Psoas muscle (tissue), 8 donors: ENCODE measurements at regions of chr6 and their contacts with region 1.

Region 1: DNA sequence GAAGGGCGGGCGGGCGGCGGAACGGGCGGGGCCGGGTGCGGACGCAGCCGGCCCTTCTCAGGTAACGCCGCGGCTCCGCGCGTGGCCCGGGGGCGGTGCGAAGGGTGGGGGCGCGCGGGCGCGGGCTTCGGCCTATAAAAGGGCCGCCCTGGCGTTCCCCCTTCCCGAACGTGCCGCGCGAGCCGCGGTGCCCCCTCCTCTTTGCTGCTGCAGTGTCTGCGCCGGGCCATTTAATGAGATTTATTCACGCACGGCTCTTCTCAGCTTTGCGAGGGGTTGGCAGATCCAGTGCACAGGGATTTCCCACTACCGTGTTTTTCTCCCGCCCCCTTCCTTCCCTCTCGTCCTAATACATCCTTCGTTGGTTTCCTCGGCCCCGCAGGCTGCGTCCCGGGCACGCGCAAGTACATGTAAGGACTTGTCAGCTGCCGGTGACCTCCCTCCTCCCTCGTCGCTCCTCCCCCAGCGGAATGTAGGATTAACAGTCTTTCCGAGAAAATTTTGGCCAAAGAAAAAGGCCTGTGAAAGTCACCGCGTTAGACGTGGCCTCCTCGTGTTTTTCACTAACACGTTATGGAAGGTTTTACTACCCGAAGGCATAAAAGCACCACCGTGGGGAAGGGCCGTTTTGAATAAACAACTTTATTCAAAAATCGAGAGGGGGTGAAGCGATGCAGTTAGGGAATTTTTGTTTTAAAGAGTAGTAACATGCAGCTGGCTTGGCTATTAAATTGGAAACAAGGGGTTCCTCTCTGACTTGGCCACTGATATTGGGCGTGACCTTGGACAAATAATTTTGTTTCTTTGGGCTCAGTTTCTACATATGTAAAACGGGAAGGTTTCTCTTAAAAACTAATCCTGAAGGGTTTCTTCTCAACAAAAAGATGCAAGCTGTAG is 966 bp upstream of the REV3L start:
- DNase-seq: peak; percentile 94 to 95
- ATAC-seq: peak; percentile 85 to 89 (median 86)
- H3K4me3 ChIP-seq: peak overlapping the region; percentile 94
- H3K27ac ChIP-seq: peak overlapping the region; percentile 98
- H3K4me1 ChIP-seq: peaks cover 43% of the 10 kb centered on the region
- H3K27me3 ChIP-seq: no peaks in the 10 kb centered on the region
- CTCF ChIP-seq: no peak

Region 2: DNA sequence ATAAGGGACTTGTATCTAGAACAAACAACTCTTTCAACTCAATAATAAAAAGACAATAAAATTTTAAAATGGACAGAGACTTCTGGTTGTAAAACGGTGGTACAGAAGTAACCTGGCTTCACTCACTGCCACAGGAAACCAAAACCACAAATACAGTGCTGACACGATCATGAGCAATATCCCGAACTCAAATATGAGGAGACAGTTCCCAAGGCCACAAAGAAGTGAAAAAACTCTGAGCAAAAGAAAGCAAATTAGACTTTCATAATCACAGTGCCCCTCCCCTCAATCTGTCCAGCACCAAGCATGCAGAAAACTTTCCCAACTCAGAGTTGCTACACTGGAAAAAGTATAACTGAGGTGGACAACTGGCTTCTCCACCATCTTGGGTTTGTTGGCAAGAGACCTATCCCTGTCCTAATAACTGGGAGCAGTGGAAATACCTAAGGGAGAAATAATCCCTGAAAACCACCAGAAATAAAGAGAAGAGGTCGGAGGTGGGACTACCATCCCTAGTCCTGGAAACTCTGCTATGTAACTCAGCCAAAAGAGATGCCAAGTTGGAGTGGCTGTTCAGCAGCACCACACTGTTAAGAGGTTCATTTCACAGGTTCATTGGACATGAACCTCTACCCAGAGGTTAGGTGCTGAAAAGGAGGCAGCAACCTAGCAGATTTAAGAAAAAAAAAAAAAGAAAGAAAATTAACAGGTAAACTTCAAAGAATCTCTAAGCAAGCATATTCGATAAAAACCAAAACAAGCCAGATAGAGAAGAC is 56.5 kb before region 1 on chr6:
- intact Hi-C with region 1: loop called in 1 of 2 experiments (anchors 5 kb)
- DNase-seq: no peak
- ATAC-seq: peak; percentile 58 to 68 (median 65)
- H3K4me3 ChIP-seq: no peak overlapping the region
- H3K27ac ChIP-seq: peak overlapping the region; percentile 10
- H3K4me1 ChIP-seq: peaks cover 54% of the 10 kb centered on the region
- H3K27me3 ChIP-seq: no peaks in the 10 kb centered on the region
- CTCF ChIP-seq: no peak

Region 3: DNA sequence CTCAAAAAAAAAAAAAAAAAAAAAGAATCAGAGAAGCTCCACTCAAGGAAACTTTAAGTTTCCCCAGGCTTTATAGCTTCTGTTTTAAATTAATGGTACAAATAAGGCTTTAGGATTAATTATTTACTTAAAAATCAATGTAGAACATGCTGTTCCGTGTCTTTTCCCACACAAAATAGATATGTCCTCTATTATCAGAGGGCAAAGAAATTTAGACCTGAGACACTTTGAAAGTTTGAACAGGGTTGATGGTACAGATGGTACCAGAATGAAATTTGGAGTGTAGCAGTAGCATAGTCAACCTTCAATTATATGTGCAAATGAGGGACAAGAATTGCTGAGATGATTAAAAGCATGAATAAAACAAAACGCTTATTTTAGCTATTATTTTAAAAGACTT is 31.3 kb after region 1 on chr6:
- intact Hi-C with region 1: no loop called
- DNase-seq: no peak
- ATAC-seq: no peak
- H3K4me3 ChIP-seq: no peak overlapping the region
- H3K27ac ChIP-seq: no peak overlapping the region
- H3K4me1 ChIP-seq: no peaks in the 10 kb centered on the region
- H3K27me3 ChIP-seq: no peaks in the 10 kb centered on the region
- CTCF ChIP-seq: no peak

Region 4: DNA sequence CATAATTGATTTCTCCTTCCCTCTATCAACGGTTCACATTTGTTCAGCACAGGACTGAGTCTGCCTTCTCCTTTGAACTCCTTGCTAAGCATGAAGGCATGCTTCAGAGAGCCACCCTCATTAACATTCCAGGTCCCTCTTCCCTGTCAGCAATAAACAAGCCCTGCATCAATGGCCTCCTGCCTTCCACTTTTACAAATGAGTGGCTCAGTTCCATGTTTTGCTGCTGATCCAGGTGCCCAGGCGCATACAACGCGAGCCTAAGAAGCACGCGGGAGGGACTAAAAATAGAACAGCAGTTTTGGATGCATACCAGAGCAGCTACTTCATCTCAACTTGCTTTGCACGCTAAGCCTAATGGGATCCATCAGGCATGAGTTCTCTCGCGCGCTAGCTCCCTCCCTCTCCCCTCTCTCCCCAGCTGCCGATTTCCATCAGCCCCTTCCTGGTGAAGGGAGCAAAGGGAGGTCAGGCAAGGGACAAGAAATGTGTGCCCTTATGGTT is 68.3 kb after region 1 on chr6:
- intact Hi-C with region 1: loop called (anchors 1 to 5 kb)
- DNase-seq: peak; percentile 64 to 86
- ATAC-seq: peak; percentile 92 to 93 (median 93)
- H3K4me3 ChIP-seq: peak overlapping the region; percentile 23
- H3K27ac ChIP-seq: peak overlapping the region; percentile 88
- H3K4me1 ChIP-seq: peaks cover 56% of the 10 kb centered on the region
- H3K27me3 ChIP-seq: no peaks in the 10 kb centered on the region
- CTCF ChIP-seq: no peak

Region 5: GRCh38 chr6:111642463-111643158 is 158.6 kb after region 1 on chr6:
- intact Hi-C with region 1: loop called in 1 of 2 experiments (anchors 5 kb)
- DNase-seq: peak; percentile 59 to 80
- ATAC-seq: peak; percentile 54 to 79 (median 68)
- H3K4me3 ChIP-seq: no peak overlapping the region
- H3K27ac ChIP-seq: no peak overlapping the region
- H3K4me1 ChIP-seq: peaks cover 4% of the 10 kb centered on the region
- H3K27me3 ChIP-seq: no peaks in the 10 kb centered on the region
- CTCF ChIP-seq: peak; percentile 61